Motor neuron (in vitro differentiated cells): ENCODE measurements at regions of chr3 and their contacts with region 1.

Region 1: GRCh38 chr3:31768479-31769123 is 212.5 kb downstream of the OSBPL10 start:
- ATAC-seq: peak in 7 of 8 experiments; percentile 46 to 90 (median 74)
- H3K4me3 ChIP-seq: no peak overlapping the region
- H3K27ac ChIP-seq: no peak overlapping the region
- H3K4me1 ChIP-seq: peaks cover 0 to 6% of the 10 kb centered on the region in 2 donors

Region 2: GRCh38 chr3:30768703-30769685 is 999.6 kb before region 1 on chr3:
- in situ Hi-C with region 1: loop called in 2 of 9 experiments (anchors 25 kb)
- ATAC-seq: peak in 6 of 8 experiments; percentile 13 to 57 (median 34)
- H3K4me3 ChIP-seq: no peak overlapping the region
- H3K27ac ChIP-seq: no peak overlapping the region
- H3K4me1 ChIP-seq: peaks cover 11 to 16% of the 10 kb centered on the region in 2 donors

Region 3: GRCh38 chr3:31710123-31710803 is 58.3 kb before region 1 on chr3:
- in situ Hi-C with region 1: no loop called
- ATAC-seq: no peak
- H3K4me3 ChIP-seq: no peak overlapping the region
- H3K27ac ChIP-seq: no peak overlapping the region
- H3K4me1 ChIP-seq: peaks cover 0 to 4% of the 10 kb centered on the region in 2 donors

Region 4: DNA sequence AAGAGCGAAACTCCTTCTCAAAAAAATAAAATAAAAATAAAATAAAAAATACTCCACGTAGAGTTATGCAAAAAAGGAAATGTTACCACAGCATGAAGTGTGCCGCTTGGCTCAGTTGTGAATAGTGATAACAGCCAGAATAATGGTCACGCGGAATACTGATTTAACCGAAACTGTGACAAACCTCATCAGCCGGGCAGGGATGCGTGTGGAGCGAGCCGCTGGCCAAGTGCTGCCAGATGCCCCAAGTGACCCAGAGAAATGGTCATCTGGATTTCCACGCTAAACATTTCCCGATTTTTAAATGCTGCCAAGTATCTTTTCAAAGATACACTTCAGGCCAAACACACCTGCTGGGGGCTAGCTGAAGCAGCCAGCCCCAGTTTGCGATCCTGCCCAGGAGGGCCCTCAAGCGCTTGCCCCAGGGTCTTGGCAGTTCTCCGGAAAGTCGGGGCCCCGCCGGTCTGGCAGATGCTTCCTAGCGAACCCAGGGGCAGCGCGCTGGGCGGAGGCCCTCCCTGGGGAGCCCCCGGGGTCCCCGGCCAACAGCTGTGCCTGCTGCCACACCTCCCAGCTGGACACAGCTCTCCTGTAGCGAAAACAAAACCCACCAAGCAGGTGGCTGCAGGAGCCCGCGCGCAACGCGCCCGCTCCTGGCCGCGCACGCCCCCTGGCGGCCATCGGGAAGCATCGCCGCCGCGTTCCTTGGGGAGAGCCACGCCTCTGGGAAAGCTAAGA is 698.9 kb after region 1 on chr3:
- in situ Hi-C with region 1: no loop called
- ATAC-seq: peak; percentile 70 to 98 (median 96)
- H3K4me3 ChIP-seq: no peak overlapping the region
- H3K27ac ChIP-seq: no peak overlapping the region
- H3K4me1 ChIP-seq: peaks cover 0 to 2% of the 10 kb centered on the region in 2 donors